SK-N-SH (cell line): ENCODE measurements at regions of chr3 and their contacts with region 1.

Region 1: DNA sequence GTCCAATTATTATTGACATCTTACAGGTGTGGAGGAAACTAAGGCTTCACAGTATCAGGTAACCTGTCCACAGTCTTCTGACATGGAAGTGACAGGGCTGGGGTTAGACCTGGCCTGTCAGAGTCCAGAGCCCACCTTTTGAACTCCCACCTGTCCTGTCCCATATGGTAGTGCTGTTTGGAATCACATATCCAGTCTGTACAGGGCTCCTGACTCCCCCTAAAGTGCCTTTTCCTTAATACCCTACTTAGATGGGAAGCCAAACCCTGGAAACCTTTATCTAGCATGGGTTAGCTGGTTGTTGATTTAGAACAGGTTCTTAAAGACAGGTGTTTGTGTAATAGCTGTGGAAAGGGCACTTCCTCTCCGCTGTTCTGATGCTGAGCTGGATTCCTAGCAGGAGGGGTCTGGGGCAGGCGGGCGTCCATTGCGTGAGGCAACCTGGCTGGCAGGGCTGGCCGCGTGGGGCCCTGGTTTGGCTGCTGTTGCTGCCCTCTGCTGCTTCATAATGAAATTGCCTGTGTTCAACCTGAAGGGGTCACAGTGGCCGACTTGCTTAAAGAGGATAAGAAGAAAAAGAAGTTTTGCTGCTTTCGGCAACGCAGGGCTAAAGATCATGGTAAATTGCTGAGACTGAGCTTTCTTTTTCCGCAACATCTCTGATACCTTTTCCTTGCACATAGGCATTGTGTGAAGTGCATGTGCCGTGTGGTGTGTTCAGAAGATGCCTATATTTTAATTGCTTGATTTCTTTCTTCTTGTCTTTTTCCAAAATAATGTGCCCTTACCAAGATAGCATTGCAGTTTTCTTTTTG is 136.2 kb downstream of the CHDH start:
- DNase-seq: peak; percentile 86
- H3K4me3 ChIP-seq: no peak overlapping the region; a peak in 1 of 4 replicates
- H3K27ac ChIP-seq: no peak overlapping the region
- H3K4me1 ChIP-seq: peaks cover 0 to 46% of the 10 kb centered on the region in 2 experiments; a peak in 1 of 4 replicates
- H3K27me3 ChIP-seq: no peaks in the 10 kb centered on the region; the same call in none of the 2 replicates
- CTCF ChIP-seq: peak; percentile 80
- EP300 ChIP-seq: no peak
- RAD21 ChIP-seq: peak; percentile 94

Region 2: DNA sequence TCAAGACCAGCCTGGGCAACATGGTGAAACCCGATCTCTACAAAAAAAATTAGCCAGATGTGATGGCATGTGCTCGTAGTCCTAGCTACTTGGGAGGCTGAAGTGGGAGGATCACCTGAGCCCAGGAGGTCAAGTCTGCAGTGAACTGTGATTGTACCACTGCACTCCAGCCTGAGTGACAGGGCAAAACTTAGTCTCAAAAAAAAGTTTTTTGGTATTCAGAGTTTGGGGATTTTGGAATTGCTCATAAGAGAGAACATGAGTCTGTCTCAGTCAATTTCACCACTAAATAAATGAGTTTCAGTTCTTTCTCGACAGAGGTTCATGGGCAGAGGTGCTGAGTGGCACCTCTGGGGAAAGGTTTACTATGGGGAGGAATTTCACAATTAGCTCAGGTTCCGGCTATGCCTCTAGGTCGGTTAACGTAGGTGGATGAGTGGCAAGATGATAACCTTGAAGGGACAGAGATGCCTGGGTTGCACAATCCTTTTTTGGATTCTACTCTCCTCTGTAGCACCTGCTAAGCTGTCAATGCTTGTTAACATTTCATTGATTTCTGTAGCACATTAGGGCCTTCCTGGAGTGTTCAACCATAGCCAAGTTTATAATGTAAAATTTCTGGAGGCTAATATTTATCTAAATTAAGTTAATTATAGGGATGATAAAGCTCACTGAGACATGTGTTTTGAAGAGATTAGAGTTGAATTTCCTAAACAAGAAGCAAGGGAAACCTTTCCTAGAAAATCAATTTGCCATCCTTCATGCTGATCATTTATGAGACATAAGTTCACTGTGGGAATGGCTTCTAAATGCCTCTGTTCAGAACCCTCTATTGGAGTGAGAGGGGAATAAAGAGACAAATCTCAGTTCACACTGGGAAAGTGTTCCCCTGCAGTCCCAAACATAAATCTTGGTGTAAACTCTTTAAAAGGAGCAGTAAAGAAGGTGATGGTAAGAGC is 325.3 kb before region 1 on chr3:
- CTCF ChIA-PET with region 1: interaction called, 12 read pairs
- POLR2A ChIA-PET with region 1: no interaction called
- DNase-seq: peak; percentile 30
- H3K4me3 ChIP-seq: no peak overlapping the region
- H3K27ac ChIP-seq: peak overlapping the region in 1 of 2 experiments; percentile 64; a peak in 2 of 4 replicates
- H3K4me1 ChIP-seq: peaks cover 0 to 12% of the 10 kb centered on the region in 2 experiments; a peak in 1 of 4 replicates
- H3K27me3 ChIP-seq: no peaks in the 10 kb centered on the region
- CTCF ChIP-seq: no peak
- EP300 ChIP-seq: peak in 1 of 2 experiments; percentile 90; a peak in 2 of 4 replicates
- RAD21 ChIP-seq: no peak; the same call in 1 of the 2 replicates

Region 3: DNA sequence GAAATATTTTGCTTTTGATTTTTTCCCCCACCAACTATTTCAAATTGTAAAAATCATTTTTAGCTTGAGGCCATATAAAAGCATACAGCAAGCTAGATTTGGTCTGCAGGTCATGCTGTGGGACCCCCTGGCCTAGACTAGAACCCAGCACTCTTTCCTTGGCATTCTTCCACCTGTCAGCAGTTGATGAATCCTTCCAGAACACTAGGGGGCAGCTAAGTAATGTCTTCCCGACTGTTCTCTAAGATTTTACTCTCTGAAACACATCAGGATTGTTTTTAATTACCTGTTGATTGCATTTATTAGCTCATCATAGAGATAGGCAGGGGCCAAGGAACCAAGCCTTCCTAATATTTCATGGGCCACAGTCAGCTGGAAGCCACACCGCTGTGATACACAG is 41.2 kb before region 1 on chr3:
- CTCF ChIA-PET with region 1: interaction called, 35 read pairs
- POLR2A ChIA-PET with region 1: no interaction called
- DNase-seq: no peak
- H3K4me3 ChIP-seq: no peak overlapping the region
- H3K27ac ChIP-seq: no peak overlapping the region; a peak in 1 of 4 replicates
- H3K4me1 ChIP-seq: peaks cover 0 to 40% of the 10 kb centered on the region in 2 experiments; a peak in 2 of 4 replicates
- H3K27me3 ChIP-seq: no peaks in the 10 kb centered on the region; the same call in 1 of the 2 replicates
- CTCF ChIP-seq: peak; percentile 44
- EP300 ChIP-seq: no peak
- RAD21 ChIP-seq: peak; percentile 62

Region 4: DNA sequence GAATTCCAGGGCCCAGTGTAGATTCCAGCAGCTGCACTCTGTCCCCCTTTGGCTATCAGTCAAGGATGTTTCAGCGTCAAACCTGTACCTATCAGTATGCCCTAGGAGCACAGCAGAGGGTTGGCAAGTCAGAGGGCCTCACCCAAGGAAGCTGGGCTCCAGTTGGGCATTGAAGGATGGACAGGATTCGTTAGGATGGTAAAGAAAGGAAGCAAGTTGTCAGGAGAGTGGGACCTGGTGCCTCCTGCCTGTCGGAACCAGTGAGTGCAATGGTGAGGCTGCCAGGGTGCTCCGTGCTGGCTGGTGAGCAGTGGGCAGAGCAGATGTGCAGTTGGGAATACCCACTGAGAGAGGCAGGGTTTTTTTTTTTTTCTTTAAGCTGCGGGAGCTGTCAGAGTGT is 21.1 kb before region 1 on chr3:
- CTCF ChIA-PET with region 1: interaction called, 45 read pairs
- POLR2A ChIA-PET with region 1: interaction called, 3 read pairs
- DNase-seq: no peak
- H3K4me3 ChIP-seq: no peak overlapping the region
- H3K27ac ChIP-seq: no peak overlapping the region
- H3K4me1 ChIP-seq: peaks cover 0 to 4% of the 10 kb centered on the region in 2 experiments; a peak in 1 of 4 replicates
- H3K27me3 ChIP-seq: no peaks in the 10 kb centered on the region
- CTCF ChIP-seq: no peak
- EP300 ChIP-seq: no peak
- RAD21 ChIP-seq: peak; percentile 23; the same call in 1 of the 2 replicates

Region 5: DNA sequence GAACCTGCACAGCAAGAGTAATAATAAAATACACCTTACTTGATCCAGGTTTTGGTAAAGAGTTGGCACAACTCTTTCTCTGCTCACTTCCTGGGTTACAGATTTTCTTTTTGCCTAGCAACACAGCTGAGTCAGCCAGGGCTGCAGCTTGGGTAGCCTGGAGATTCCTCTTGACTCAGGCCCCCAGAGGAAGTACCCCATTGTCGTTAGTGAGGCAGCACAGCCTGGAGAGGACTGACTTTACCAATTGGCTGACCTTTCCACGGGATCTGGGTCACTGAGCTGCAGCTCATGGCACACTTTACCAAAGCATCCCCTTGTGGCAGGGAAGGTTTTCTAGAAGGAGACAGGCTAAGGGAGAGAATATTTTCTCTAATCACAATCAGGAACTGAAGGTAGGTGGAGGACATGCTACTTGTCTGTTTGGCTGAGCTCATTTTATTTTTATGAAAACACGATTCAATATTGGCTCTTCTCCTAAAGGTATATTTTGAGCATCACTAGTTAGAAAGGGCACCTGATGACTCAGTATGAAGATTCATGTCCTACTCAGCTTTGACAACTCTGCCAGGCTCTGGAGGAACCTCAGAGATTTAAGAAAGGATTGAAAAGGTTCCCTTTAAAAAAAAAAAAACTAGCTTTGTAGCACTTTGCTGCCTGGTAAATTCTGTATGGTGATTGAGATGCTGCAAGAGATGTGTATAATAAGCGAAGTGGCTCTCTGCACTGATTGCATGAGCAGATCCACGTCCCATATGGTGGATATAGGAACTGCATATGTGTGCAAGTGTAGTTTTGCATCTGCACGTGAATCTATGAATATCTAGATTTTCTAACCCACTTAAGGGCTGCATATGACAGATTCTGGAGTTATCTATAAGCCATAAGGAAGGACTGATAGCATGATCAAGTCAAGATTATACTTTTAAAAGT is 11.4 kb after region 1 on chr3:
- CTCF ChIA-PET with region 1: interaction called, 16 read pairs
- POLR2A ChIA-PET with region 1: no interaction called
- DNase-seq: no peak
- H3K4me3 ChIP-seq: no peak overlapping the region
- H3K27ac ChIP-seq: no peak overlapping the region
- H3K4me1 ChIP-seq: no peaks in the 10 kb centered on the region; a peak in 1 of 4 replicates
- H3K27me3 ChIP-seq: no peaks in the 10 kb centered on the region
- CTCF ChIP-seq: no peak
- EP300 ChIP-seq: 0 out of 4 replicates have a peak, but pooled peaks of 1 of the 2 experiments have one; percentile 13
- RAD21 ChIP-seq: no peak